ENCODE measurements at regions of chr6 and their contacts with region 1.

Region 1: DNA sequence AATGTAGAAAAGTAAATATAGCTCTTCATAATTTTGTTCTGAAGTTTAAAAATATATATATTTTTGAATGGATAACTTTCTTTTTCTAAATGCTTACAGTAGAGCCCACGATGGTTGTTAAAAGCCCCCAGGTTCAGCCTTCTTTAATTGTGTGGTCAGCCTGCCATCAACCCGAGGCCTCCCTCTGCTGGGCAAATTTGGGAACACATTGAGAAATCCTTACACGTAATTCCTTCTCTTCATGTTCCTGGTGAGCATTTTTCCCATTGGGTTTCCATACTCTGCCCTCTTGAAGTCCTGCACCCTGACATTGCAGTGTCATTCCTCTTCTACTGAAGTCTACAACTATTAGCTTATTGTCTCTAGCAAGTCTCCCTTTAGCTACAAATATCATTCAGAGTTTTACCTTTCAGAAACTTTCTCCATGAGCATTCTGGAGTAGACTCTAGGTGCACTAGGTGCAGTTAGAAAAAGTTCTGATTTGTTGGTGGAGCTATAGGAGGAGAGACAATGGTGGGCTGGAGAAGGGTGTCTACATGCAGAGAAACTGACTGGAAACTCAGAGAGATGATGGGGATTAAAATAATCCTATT is 40.6 kb downstream of the TRIM38 start:
- DNase-seq: peak; percentile 54
- H3K4me3 Mint-ChIP-seq: no peak overlapping the region
- H3K27ac Mint-ChIP-seq: no peak overlapping the region
- H3K4me1 Mint-ChIP-seq: peaks cover 4% of the 10 kb centered on the region
- H3K27me3 Mint-ChIP-seq: no peaks in the 10 kb centered on the region

Region 2: GRCh38 chr6:25981568-25982263 is 21.5 kb before region 1 on chr6:
- CTCF ChIA-PET with region 1: interaction called, 10 read pairs
- POLR2A ChIA-PET with region 1: no interaction called
- intact Hi-C with region 1: no loop called
- DNase-seq: no peak
- H3K4me3 Mint-ChIP-seq: no peak overlapping the region
- H3K27ac Mint-ChIP-seq: peak overlapping the region; percentile 70
- H3K4me1 Mint-ChIP-seq: peaks cover 40% of the 10 kb centered on the region
- H3K27me3 Mint-ChIP-seq: no peaks in the 10 kb centered on the region

Region 3: GRCh38 chr6:26033085-26033940 is 30.1 kb after region 1 on chr6:
- CTCF ChIA-PET with region 1: no interaction called
- POLR2A ChIA-PET with region 1: no interaction called
- intact Hi-C with region 1: no loop called
- DNase-seq: peak; percentile 84
- H3K4me3 Mint-ChIP-seq: peak overlapping the region; percentile 83
- H3K27ac Mint-ChIP-seq: peak overlapping the region; percentile 99
- H3K4me1 Mint-ChIP-seq: peaks cover 36% of the 10 kb centered on the region
- H3K27me3 Mint-ChIP-seq: peaks cover 12% of the 10 kb centered on the region